Sciatic nerve (tissue), 2 donors: ENCODE measurements at regions of chr4 and their contacts with region 1.

Region 1: DNA sequence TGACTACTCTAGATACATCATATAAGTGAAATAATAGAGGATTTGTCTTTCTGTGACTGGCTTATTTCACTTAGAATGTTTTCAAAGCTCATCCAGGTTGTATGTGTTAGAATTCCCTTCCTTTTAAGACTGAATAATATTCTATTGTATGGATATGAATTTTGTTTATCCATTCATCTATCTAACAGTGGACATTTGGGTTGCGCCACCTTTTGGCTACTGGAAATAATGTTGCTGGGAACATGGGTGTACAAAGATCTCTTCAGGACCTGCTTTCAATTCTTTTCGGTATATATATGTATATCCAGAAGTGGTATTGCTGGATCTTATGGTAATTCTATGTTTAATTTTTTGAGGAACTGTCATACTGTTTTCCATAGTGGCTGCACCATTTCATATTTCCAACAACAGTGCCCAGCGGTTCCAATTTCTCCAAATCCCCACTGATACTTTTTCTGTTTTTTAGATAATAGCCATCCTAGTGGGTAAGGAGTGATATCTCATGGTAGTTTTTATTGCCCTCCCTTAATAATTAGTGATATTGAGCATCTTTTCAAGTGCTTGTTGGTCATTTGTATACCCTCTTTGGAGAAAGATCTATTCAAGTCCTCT is 3.4 kb upstream of the SCD5 start:
- DNase-seq: no peak
- ATAC-seq: no peak

Region 2: DNA sequence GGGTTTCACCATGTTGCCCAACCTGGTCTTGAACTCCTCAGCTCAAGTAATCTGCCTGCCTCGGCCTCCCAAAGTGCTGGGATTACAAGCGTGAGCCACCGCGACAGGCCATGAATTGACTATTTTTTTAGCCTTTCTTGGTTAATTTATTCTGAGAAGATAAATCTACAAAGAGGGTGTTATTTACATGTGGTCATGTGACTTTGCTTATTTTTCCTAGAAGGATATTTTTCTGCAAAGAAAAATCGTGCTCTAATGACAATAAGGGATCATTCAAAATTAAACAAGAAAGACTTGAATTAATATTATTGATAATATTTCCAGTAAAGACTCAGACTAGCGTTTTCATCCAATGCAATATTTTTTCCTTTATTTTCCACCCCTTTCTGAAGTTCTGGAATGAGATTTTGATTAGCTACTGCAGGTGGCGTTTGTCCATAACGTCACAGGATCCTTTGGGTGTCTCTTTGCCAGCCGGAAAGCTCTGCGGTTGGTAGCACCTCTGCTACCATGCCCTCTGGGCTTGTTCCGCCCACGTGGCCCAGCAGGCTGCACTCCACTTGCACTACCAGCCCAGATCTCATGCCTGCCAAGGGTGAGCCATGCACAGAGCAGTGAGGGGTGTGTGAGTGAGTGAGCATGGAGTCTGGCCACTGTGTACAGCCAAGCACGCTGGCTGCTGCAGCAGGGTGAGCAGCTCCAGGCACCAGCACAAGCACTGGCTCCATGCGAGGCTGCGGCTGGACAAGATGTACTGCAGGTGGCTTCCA is 421.9 kb before region 1 on chr4:
- intact Hi-C with region 1: loop called (anchors 5 kb)
- DNase-seq: no peak
- ATAC-seq: peak; percentile 55